ENCODE measurements at regions of chr5 and their contacts with region 1.

Region 1: DNA sequence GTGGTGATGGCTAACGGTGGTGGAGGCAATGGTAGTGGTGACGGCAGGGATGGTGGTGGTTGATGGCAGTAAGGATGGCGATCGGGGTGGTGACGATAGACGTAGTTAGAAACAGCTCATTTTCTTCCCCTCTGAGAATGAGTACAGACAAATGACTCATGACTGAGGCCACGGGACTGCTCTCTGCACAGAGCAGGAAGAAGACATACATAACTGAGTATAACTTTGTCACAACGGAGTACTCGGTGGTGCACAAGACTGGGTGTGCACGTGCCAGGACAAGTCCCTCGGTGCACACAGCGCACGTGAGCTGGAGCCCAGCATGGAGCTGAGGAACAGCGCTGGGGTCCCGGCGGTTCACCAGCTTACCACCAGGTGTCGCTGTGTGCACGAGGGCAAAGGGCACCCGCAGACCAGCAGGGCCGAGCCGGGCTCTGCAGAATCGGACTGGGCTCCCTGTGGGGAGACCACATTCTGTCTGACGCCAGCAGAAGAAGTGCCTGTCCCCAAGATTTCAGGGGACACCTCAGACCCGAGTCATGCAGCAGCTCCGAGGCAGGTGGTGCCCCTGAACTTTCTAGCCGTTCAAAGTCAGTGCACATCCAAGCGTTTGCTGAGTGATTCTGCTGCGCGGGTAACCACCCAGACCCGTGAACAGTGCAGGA is 188.6 kb downstream of the FSTL4 start:
- DNase-seq: peak; percentile 91
- ATAC-seq: peak; percentile 80
- H3K4me3 Mint-ChIP-seq: no peak overlapping the region
- H3K27ac Mint-ChIP-seq: no peak overlapping the region
- H3K4me1 Mint-ChIP-seq: peaks cover 48% of the 10 kb centered on the region
- H3K27me3 Mint-ChIP-seq: peaks cover 33% of the 10 kb centered on the region
- CTCF ChIP-seq: peak; percentile 96

Region 2: GRCh38 chr5:133331941-133332340 is 91.8 kb before region 1 on chr5:
- CTCF ChIA-PET with region 1: interaction called, 11 read pairs
- POLR2A ChIA-PET with region 1: no interaction called
- DNase-seq: no peak
- ATAC-seq: no peak
- H3K4me3 Mint-ChIP-seq: no peak overlapping the region
- H3K27ac Mint-ChIP-seq: no peak overlapping the region
- H3K4me1 Mint-ChIP-seq: peaks cover 63% of the 10 kb centered on the region
- H3K27me3 Mint-ChIP-seq: peaks cover 60% of the 10 kb centered on the region
- CTCF ChIP-seq: no peak

Region 3: DNA sequence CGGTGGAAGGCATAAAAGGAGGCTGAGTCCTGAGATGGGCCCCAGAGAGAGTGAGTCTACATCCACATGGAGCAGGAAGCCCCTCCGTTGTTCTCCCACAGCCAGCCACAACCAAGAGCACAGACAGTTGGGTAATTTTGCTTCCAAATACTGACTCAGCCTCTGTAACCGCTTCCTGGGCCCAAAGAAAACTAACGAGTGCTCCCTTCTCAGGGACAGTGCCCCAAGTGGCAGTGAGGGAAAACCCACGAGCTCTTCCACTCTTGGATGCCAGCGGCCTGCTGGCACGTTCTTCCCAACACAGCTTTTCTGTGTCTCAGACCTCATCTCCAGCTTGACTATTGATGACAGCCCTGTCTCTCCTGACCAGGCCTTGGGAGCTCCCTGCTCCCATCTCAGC is 19.0 kb before region 1 on chr5:
- CTCF ChIA-PET with region 1: interaction called, 50 read pairs
- POLR2A ChIA-PET with region 1: no interaction called
- DNase-seq: no peak
- ATAC-seq: peak; percentile 58
- H3K4me3 Mint-ChIP-seq: no peak overlapping the region
- H3K27ac Mint-ChIP-seq: no peak overlapping the region
- H3K4me1 Mint-ChIP-seq: peaks cover 36% of the 10 kb centered on the region
- H3K27me3 Mint-ChIP-seq: no peaks in the 10 kb centered on the region
- CTCF ChIP-seq: no peak

Region 4: GRCh38 chr5:133460172-133460758 is 36.5 kb after region 1 on chr5:
- CTCF ChIA-PET with region 1: interaction called, 103 read pairs
- POLR2A ChIA-PET with region 1: interaction called, 3 read pairs
- DNase-seq: peak; percentile 80
- ATAC-seq: peak; percentile 85
- H3K4me3 Mint-ChIP-seq: no peak overlapping the region
- H3K27ac Mint-ChIP-seq: no peak overlapping the region
- H3K4me1 Mint-ChIP-seq: peaks cover 20% of the 10 kb centered on the region
- H3K27me3 Mint-ChIP-seq: no peaks in the 10 kb centered on the region
- CTCF ChIP-seq: peak; percentile 93

Region 5: DNA sequence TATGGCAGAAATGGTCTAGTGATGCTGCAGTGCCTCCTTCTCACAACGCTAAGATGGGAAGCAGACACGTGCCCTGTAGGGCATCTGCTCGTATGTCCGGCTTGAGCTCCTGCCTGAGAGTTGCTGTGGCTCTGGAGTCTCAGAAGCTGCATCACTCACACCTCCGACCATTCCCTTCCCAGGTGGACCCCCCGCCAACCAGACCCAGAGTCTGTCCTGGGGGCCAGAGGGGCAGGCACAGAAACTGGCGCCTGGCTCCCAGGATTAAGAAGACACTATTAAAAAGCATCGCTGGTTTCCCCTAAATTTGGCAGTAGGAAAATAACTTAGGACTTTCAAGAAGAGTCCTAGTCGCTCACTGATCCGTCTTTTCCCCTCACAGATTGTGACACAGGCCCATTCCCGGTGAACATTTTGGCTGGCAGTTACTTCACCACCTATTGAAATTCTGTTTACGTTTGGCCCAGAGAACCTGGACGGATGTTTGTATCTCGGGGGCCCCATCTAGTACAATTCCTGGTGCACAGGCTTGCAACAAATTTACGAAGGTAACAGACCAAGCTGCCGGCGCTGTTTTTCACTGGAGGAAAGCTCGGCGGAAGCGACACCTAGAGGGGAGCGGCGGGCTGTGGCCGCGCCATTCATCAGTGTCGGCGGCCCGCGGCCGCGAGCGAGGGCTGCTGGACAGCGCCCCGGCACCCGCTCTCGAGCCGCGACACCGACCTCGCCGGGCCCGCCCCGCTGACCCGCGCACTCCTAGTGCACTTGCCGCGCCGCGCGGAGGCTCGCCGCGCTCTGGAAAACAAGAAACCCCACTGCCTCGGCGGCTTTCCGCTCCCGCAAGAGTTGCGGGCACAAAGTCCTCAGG is 187.0 kb after region 1 on chr5:
- CTCF ChIA-PET with region 1: interaction called, 35 read pairs
- POLR2A ChIA-PET with region 1: no interaction called
- DNase-seq: peak; percentile 83
- ATAC-seq: peak; percentile 84
- H3K4me3 Mint-ChIP-seq: peak overlapping the region; percentile 69
- H3K27ac Mint-ChIP-seq: no peak overlapping the region
- H3K4me1 Mint-ChIP-seq: peaks cover 15% of the 10 kb centered on the region
- H3K27me3 Mint-ChIP-seq: peaks cover 64% of the 10 kb centered on the region
- CTCF ChIP-seq: 0 out of 2 replicates have a peak, but pooled peaks have one; percentile 23

Measured in WTC11 (cell line).